ENCODE measurements at regions of chr3 and their contacts with region 1.

Region 1: GRCh38 chr3:87771341-87772192 is 287.2 kb downstream of the CGGBP1 start:
- DNase-seq: no peak
- ATAC-seq: no peak
- H3K4me3 ChIP-seq: no peak overlapping the region
- H3K27ac ChIP-seq: no peak overlapping the region
- H3K4me1 ChIP-seq: no peaks in the 10 kb centered on the region
- H3K27me3 ChIP-seq: no peaks in the 10 kb centered on the region
- CTCF ChIP-seq: peak in 3 of 5 experiments; percentile 24 to 38 (median 34)
- POLR2A ChIP-seq: no peak

Region 2: DNA sequence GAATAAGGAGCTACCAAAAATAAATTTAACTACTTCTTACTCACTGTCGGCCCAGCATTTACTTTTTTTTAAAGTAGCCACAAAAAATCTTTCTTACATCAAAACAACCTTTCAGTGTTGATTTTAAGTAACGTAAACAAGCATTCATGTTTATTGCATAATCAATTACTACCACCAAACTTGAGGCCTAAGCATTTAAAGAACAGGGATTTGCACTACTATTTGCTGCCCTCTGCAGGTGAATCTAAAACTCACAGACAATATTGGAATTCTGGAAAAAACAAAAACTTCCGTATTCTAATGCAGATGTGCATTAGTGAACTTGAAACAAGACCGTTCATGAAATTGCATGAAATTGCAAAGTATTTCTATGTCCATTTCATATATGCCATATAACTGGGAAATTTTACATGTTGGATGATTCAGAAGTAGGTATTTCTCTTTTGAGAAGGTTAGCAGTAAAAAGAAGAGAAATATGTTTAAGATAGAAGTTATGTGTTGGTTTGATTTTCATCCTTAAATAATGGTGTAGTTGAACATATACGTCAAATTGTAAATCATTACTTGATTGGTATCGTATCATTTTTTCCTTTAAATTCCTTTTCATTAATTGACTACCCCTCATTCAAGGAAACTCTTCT is 231.7 kb after region 1 on chr3:
- in situ Hi-C with region 1: no loop called
- intact Hi-C with region 1: loop called (anchors 5 kb)
- DNase-seq: no peak
- ATAC-seq: no peak
- H3K4me3 ChIP-seq: no peak overlapping the region
- H3K27ac ChIP-seq: no peak overlapping the region
- H3K4me1 ChIP-seq: no peaks in the 10 kb centered on the region
- H3K27me3 ChIP-seq: no peaks in the 10 kb centered on the region
- CTCF ChIP-seq: peak; percentile 28 to 60 (median 43)
- POLR2A ChIP-seq: no peak

Measured in gastrocnemius medialis (tissue), 4 donors.